Activated CD8-positive, alpha-beta memory T cell treated with anti-CD3 and anti-CD28 coated beads, Interleukin-2, amount 10 ng/mL, durations not matched to agents 7 days and 5 days (primary cell): ENCODE measurements at regions of chr9 and their contacts with region 1.

Region 1: GRCh38 chr9:91150998-91151717 is 210.6 kb downstream of the AUH start:
- DNase-seq: peak; percentile 82
- ATAC-seq: peak; percentile 80
- H3K4me3 Mint-ChIP-seq: peak overlapping the region; percentile 51
- H3K27ac Mint-ChIP-seq: peak overlapping the region; percentile 94
- H3K4me1 Mint-ChIP-seq: peaks cover 95% of the 10 kb centered on the region
- H3K27me3 Mint-ChIP-seq: peaks cover 2% of the 10 kb centered on the region

Region 2: GRCh38 chr9:91043056-91043810 is 107.9 kb before region 1 on chr9:
- CTCF ChIA-PET with region 1: no interaction called
- DNase-seq: peak; percentile 38
- ATAC-seq: no peak
- H3K4me3 Mint-ChIP-seq: no peak overlapping the region
- H3K27ac Mint-ChIP-seq: no peak overlapping the region
- H3K4me1 Mint-ChIP-seq: peaks cover 83% of the 10 kb centered on the region
- H3K27me3 Mint-ChIP-seq: no peaks in the 10 kb centered on the region

Region 3: DNA sequence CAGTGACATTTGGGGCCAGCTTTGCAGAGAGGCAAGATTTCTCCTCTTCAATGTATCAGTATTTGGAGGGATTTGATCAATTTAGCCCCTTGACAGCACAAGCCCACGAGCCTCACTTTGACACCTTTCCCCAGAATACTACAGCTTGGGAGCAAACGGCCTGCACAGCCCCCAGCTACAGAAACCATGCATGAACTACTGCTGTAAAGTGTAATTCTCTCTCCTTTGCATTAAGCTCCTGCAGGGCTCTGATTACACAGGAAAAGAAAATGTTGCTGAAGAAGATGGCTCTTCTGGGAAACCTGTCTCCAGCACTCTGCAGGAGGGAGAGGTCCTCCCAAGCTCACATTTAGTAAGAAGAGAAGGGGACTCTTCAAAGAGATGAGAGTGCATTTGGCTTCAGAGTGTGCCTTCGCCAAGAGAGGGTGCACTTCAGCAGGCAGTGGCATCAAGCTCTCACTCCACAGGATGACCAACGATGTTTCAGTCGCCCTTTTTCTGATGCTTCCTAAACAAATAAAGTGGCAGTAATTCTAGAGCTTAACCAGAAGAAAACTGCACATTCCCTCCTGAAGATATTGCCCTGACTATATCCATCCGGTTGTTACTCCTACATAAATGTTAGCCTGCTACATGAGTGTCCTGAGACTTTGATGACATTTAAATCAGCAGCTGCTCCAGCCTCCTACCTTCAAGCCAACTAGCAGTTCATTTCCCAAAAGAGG is 61.6 kb before region 1 on chr9:
- CTCF ChIA-PET with region 1: interaction called, 15 read pairs
- DNase-seq: peak; percentile 56
- ATAC-seq: peak; percentile 76
- H3K4me3 Mint-ChIP-seq: no peak overlapping the region
- H3K27ac Mint-ChIP-seq: peak overlapping the region; percentile 70
- H3K4me1 Mint-ChIP-seq: peaks cover 64% of the 10 kb centered on the region
- H3K27me3 Mint-ChIP-seq: no peaks in the 10 kb centered on the region

Region 4: DNA sequence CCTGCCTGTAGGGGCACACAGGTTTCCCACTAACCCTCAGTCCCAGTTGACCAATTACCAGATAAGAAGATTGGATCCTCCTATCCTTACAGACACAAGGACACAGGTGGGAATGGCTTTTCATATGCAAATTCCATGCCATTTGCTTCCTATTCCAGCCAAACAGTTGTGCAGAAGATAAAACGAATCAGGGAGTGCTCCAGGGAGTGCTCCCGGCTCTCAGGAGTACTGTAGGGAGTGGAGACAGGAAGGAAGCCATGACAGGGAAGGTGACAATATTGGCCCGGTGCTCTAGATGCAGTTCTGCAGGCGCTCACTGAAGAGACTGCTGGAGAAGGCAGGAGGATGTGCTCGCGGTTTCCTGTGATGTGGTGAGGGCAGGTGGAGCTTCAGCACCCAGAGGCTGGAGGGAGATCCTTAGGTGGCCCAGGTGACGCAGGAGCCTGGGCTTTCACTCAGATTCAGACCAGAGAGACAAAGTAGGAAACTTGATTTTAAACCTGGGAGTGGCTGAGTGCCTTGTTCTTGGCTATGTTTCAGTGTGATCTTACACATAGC is 49.5 kb before region 1 on chr9:
- CTCF ChIA-PET with region 1: interaction called, 22 read pairs
- DNase-seq: peak; percentile 97
- ATAC-seq: peak; percentile 91
- H3K4me3 Mint-ChIP-seq: peak overlapping the region; percentile 64
- H3K27ac Mint-ChIP-seq: peak overlapping the region; percentile 90
- H3K4me1 Mint-ChIP-seq: peaks cover 73% of the 10 kb centered on the region
- H3K27me3 Mint-ChIP-seq: no peaks in the 10 kb centered on the region

Region 5: DNA sequence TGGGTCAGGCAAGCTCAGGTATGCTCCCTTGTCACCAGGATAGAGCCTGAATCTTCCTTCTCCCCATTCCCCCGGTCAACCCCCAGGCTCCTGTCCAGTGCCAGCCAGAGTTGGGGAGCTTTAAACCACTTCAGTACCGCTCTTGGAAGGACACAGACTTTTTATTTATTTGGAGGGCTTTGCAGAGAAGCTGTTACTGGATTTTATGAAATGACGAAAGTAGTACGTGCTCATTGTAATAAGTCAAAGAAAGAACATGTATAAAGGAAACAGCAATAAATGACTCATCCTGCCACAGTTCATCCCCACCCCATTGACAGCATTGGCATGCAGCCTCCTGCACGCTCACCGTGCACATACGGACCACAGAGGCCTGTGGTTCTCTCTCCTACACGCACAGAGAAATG is 19.7 kb before region 1 on chr9:
- CTCF ChIA-PET with region 1: interaction called, 13 read pairs
- DNase-seq: peak; percentile 96
- ATAC-seq: peak; percentile 98
- H3K4me3 Mint-ChIP-seq: peak overlapping the region; percentile 50
- H3K27ac Mint-ChIP-seq: peak overlapping the region; percentile 94
- H3K4me1 Mint-ChIP-seq: peaks cover 62% of the 10 kb centered on the region
- H3K27me3 Mint-ChIP-seq: no peaks in the 10 kb centered on the region

Region 6: DNA sequence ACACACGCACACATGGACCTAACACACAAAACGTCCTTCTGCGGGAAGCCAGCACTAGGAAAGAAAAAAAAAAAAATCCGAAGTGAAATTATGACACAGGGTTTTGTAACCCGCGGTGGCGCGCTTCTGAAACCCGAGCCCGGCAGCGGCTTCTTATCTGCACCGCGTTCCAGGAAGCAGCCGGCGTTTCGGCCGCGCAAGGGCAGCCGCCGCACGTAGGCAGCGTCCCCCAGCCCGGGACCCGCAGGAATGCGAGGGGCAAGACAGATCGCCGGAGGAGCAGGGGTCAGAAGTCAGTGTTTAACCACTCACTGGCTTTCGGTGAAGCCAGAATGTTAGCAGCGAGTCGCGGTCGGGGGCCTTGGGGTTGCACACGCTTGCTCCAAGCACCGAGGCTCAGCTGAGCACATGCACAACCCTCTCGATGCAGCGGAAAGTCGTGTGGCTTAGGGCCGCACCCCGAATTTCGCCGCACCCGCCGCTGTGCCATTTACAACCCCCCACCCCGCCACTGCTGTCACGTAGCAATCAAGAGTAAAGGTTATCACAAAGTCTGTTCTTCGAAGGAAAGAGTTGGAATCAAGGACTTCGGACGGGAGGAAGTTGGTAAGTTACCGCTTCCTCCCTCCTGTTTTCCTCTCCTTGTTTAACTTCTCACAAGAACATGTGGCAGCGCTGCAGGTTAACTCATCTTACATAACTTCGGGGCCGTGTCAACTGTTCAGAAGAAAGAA is 42.7 kb after region 1 on chr9:
- CTCF ChIA-PET with region 1: interaction called, 11 read pairs
- DNase-seq: peak; percentile 93
- ATAC-seq: peak; percentile 72
- H3K4me3 Mint-ChIP-seq: peak overlapping the region; percentile 69
- H3K27ac Mint-ChIP-seq: peak overlapping the region; percentile 98
- H3K4me1 Mint-ChIP-seq: peaks cover 71% of the 10 kb centered on the region
- H3K27me3 Mint-ChIP-seq: no peaks in the 10 kb centered on the region